Activated B cell treated with CpG ODN at 0.5 μM for 24 hours (primary cell): ENCODE measurements at regions of chr7 and their contacts with region 1.

Region 1: GRCh38 chr7:44606450-44607254 is at the start of gene OGDH:
- DNase-seq: peak; percentile 100
- ATAC-seq: peak; percentile 94
- H3K4me3 Mint-ChIP-seq: peak within 1 kb of the TSS; percentile 98
- H3K27ac Mint-ChIP-seq: peak within 1 kb of the TSS; percentile 98
- H3K4me1 Mint-ChIP-seq: peaks cover 45% of the 10 kb centered on the region
- H3K27me3 Mint-ChIP-seq: no peaks in the 10 kb centered on the region
- CTCF ChIP-seq: no peak
- total RNA-seq, gene OGDH: 79.5 and 81.7 TPM in 2 replicates

Region 2: DNA sequence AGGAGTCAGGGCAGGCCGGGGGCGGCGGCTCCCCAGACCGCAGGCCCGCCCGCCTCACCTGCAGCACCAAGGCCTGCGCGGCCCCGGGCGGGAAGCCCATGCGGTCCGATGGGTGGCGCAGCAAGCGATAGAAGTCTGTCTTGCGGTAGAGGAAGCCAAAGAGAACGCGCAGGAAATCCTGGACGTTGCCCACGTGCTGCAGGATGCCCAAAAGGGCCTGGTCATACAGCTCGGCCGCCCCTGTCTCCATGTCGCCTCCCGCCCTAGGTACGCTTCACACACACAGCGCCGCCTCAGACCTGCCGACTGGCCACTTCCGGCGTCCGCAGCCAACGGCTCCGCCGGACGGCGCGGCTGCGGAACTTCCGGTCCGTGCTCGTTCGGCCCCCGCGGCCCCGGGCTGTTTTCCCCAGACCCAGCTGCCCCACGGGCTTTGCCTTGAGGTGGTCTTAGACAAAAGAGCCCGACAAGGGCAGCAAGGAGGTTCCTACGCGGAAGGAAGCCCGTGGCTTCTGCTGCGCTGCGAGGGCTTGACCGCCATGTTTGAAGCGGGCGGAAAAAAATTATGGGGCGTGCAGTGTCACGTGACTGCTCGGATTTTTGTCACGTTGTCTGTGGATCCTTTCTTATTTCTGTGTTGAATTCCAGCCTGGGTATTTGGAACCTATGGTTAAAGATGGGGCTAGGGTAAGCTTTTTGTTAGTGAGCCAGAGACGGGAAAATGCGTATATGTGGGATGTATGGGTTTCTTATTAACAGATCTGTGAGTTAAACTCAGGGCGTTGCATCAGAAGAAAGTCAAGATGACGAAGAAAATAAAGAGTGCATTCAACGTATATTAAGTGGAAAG is 116.1 kb before region 1 on chr7 and contains the start of gene NUDCD3:
- CTCF ChIA-PET with region 1: no interaction called
- POLR2A ChIA-PET with region 1: interaction called, 4 read pairs
- intact Hi-C with region 1: loop called (anchors 1 kb)
- DNase-seq: peak; percentile 80
- ATAC-seq: peak; percentile 84
- H3K4me3 Mint-ChIP-seq: peak within 1 kb of the TSS; percentile 90
- H3K27ac Mint-ChIP-seq: peak within 1 kb of the TSS; percentile 97
- H3K4me1 Mint-ChIP-seq: peaks cover 46% of the 10 kb centered on the region
- H3K27me3 Mint-ChIP-seq: peaks cover 5% of the 10 kb centered on the region
- CTCF ChIP-seq: no peak
- total RNA-seq, gene NUDCD3: 80.7 and 85.1 TPM in 2 replicates

Region 3: GRCh38 chr7:44581879-44582603 is 24.6 kb before region 1 on chr7 and contains the start of gene TMED4:
- CTCF ChIA-PET with region 1: no interaction called
- POLR2A ChIA-PET with region 1: interaction called, 45 read pairs
- intact Hi-C with region 1: loop called (anchors 1 kb)
- DNase-seq: peak; percentile 100
- ATAC-seq: peak; percentile 90
- H3K4me3 Mint-ChIP-seq: peak within 1 kb of the TSS; percentile 90
- H3K27ac Mint-ChIP-seq: peak within 1 kb of the TSS; percentile 95
- H3K4me1 Mint-ChIP-seq: peaks cover 29% of the 10 kb centered on the region
- H3K27me3 Mint-ChIP-seq: peaks cover 2% of the 10 kb centered on the region
- CTCF ChIP-seq: no peak
- total RNA-seq, gene TMED4: 61.7 and 70.1 TPM in 2 replicates

Region 4: GRCh38 chr7:44622307-44623151 is 15.9 kb after region 1 on chr7:
- CTCF ChIA-PET with region 1: no interaction called
- POLR2A ChIA-PET with region 1: interaction called, 10 read pairs
- intact Hi-C with region 1: loop called (anchors 2 kb)
- DNase-seq: no peak
- ATAC-seq: peak; percentile 71
- H3K4me3 Mint-ChIP-seq: peak overlapping the region; percentile 28
- H3K27ac Mint-ChIP-seq: peak overlapping the region; percentile 74
- H3K4me1 Mint-ChIP-seq: peaks cover 63% of the 10 kb centered on the region
- H3K27me3 Mint-ChIP-seq: no peaks in the 10 kb centered on the region
- CTCF ChIP-seq: no peak

Region 5: DNA sequence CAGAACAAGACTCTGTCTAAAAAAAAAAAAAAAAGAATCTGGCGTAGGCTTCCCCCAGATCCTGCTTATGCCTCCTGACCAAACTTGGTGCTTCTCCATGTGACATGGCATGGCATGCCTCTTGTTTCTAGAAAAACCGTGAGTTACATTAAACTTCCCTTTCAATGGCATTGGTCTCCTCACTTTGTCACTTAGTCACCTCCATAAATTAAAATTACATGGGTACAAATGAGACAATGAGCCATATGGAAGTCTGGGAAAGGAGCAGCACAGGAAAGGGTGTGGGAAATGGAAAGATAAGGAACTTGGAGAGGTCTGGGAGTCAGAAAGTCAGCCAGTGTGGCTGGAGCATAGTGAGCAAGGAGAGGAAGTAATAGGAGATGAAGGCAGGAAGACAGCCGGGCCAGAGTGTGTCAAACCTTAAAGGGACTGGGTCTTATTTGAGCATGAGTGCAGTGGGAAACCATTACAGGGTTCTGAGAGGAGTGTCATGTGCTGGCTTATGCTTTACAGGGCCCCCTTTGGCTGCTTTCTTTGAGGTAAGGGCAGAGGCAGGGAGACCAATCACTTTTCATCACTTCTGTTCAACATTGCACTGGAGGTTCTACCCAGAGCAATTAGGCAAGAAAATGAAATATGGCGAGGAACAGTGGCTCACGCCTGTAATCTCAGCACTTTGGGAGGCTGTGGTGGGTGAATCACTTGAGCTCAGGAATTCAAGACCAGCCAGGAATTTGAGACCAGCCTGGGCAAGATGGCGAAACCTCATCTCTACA is 120.7 kb after region 1 on chr7:
- CTCF ChIA-PET with region 1: no interaction called
- POLR2A ChIA-PET with region 1: no interaction called
- intact Hi-C with region 1: no loop called
- DNase-seq: no peak
- ATAC-seq: no peak
- H3K4me3 Mint-ChIP-seq: no peak overlapping the region
- H3K27ac Mint-ChIP-seq: no peak overlapping the region
- H3K4me1 Mint-ChIP-seq: no peaks in the 10 kb centered on the region
- H3K27me3 Mint-ChIP-seq: no peaks in the 10 kb centered on the region
- CTCF ChIP-seq: no peak

Region 6: DNA sequence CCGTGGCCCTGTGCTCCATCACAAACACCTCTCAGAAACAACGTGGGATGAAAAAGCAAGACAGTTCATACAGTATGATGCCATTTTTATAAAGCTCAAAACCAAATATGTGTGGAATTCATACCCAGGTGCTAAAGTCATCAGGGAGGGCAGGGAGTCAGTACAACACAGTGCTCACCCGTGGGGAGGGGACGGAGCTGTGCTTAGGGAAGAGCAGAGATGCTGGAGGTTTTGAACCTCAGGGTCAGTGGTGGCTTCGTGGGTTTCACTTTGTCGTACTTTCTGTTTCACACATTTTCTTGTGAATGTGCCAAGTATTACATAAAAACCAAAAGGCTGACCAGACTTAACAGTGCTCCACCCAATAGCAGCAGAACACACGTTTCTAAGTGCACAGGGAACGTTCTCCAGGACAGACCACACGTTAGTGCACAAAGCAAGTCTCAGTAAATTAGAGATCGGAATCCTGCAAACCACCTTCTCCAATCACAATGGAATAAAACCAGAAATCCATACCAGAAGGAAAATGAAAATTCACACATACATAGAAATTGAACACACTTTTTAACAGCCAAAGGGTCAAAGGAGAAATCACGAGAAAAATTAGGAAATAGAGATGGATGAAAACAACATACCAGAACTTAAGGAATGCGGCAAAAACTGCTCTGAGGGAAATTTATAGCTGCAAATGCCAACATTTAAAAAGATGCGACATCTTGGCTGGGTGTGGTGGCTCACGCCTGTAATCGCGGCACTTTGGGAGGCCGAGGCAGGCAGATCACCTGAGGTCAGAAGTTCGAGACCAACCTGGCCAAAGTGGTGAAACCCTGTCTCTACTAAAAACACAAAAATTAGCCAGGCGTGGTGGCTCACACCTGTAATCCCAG is 163.4 kb after region 1 on chr7:
- CTCF ChIA-PET with region 1: no interaction called
- POLR2A ChIA-PET with region 1: interaction called, 23 read pairs
- intact Hi-C with region 1: no loop called
- DNase-seq: no peak
- ATAC-seq: peak; percentile 10
- H3K4me3 Mint-ChIP-seq: peak overlapping the region; percentile 58
- H3K27ac Mint-ChIP-seq: peak overlapping the region; percentile 88
- H3K4me1 Mint-ChIP-seq: peaks cover 60% of the 10 kb centered on the region
- H3K27me3 Mint-ChIP-seq: no peaks in the 10 kb centered on the region
- CTCF ChIP-seq: no peak